ENCODE measurements at regions of chr12 and their contacts with region 1.

Region 1: DNA sequence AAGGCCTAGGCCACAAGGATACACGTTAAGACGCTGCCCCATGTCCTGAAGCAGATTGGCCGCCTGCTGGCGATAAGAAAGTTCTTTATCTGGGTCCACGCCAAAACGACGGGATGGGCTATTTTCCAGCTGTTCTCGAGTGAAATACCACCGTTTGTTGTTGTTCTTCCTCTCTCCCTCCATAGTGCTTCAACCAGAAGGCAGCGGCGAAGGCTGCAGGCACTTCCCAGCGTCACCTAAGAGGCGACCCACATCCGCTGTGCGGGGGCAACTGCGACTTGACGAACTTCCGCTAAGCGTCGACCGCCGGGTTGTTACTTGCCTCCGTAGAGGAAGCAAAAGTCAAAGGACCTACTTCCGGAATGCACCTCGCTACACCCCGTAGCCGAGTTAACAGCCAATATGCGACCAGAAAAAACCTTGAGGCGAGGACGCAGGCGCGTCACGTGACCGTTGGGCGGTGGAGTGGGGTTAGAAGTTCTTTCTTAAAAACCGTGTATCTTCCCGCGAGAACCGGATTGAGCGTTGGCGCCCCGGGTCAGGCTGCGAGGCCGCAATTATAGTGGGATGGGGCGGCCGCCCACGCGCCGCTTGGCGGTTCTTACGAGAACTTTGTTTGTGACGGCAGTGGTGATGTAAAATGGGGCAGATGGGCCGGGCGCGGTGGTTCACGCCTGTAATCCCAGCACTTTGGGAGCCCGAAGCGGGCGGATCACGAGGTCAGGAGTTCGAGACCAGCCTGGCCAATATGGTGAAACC is at the start of gene CCNT1:
- DNase-seq: peak; percentile 98 to 100
- ATAC-seq: peak; percentile 98 to 99
- H3K4me3 ChIP-seq: peak within 1 kb of the TSS; percentile 76 to 89 (median 86)
- H3K27ac ChIP-seq: peak within 1 kb of the TSS; percentile 90 to 96 (median 92)
- H3K4me1 ChIP-seq: peaks cover 27 to 32% of the 10 kb centered on the region in 2 donors
- H3K27me3 ChIP-seq: no peaks in the 10 kb centered on the region
- CTCF ChIP-seq: peak; percentile 12 to 53 (median 48)
- POLR2A ChIP-seq: peak; percentile 77 to 84
- total RNA-seq, gene CCNT1: 18.0 to 21.4 (median 19.6) TPM

Region 2: GRCh38 chr12:48350249-48351021 is 366.2 kb before region 1 on chr12 and contains the start of gene ZNF641:
- in situ Hi-C with region 1: no loop called
- intact Hi-C with region 1: loop called (anchors 2 kb)
- DNase-seq: peak; percentile 67 to 79
- ATAC-seq: peak; percentile 84 to 91
- H3K4me3 ChIP-seq: peak within 1 kb of the TSS; percentile 79 to 94 (median 90)
- H3K27ac ChIP-seq: peak within 1 kb of the TSS; percentile 92 to 98 (median 95)
- H3K4me1 ChIP-seq: peaks cover 17 to 24% of the 10 kb centered on the region in 2 donors
- H3K27me3 ChIP-seq: no peaks in the 10 kb centered on the region
- CTCF ChIP-seq: no peak
- POLR2A ChIP-seq: peak; percentile 60 to 66
- total RNA-seq, gene ZNF641: 31.8 to 43.1 (median 34.2) TPM

Region 3: GRCh38 chr12:48671231-48671856 is 45.3 kb before region 1 on chr12:
- in situ Hi-C with region 1: no loop called
- intact Hi-C with region 1: loop called (anchors 2 kb)
- DNase-seq: peak; percentile 52 to 56
- ATAC-seq: peak; percentile 75 to 87
- H3K4me3 ChIP-seq: no peak overlapping the region
- H3K27ac ChIP-seq: peak overlapping the region; percentile 88 to 99 (median 96)
- H3K4me1 ChIP-seq: peaks cover 51 to 72% of the 10 kb centered on the region in 2 donors
- H3K27me3 ChIP-seq: no peaks in the 10 kb centered on the region
- CTCF ChIP-seq: no peak
- POLR2A ChIP-seq: no peak

Region 4: GRCh38 chr12:48946205-48946604 is 229.5 kb after region 1 on chr12:
- in situ Hi-C with region 1: no loop called
- intact Hi-C with region 1: no loop called
- DNase-seq: no peak
- ATAC-seq: no peak
- H3K4me3 ChIP-seq: no peak overlapping the region
- H3K27ac ChIP-seq: no peak overlapping the region
- H3K4me1 ChIP-seq: peaks cover 0 to 3% of the 10 kb centered on the region in 2 donors
- H3K27me3 ChIP-seq: no peaks in the 10 kb centered on the region
- CTCF ChIP-seq: no peak
- POLR2A ChIP-seq: no peak

Region 5: DNA sequence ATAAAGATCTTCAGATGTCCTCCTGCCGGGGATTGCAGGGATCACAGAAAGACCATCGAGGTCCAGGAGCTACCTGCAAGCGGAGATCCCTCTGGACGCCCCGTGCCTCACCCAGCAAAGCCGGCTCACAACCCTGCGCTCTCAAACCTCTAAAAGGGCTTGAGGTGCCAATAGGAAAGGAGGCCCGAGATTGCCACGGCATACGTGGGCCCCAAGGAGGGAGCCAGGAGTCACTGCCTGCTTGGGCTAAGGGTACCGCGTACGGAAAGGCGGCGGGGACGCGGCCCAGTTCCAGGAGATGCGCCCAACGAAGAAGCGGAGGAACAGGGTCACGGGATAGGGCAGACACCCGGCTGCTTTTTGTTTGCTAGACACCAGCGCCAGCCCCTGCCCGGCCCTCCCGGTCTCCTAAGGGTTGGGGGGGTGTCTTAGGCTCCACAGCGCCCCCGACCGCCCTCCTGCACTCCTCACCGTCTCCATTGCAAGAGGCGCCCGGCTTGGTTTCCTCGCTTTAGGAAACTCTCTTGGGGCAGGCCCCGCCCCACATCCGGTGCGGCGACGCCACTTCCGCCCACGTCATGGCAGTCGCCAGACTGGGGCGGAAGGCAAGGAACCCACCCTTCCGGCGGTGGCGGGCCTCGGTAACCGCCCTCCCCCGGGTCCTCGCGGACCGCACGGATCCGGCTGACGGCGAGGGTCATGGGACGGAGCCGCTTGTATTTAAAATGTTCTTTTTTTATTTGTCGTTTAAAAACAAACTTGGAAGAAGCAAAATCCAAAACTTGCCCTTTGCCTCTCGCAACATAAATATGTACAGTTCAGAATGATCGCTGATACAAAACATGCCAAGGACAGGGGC is 301.8 kb after region 1 on chr12 and contains the start of gene PRKAG1:
- in situ Hi-C with region 1: no loop called
- intact Hi-C with region 1: loop called (anchors 5 kb)
- DNase-seq: peak; percentile 92 to 96
- ATAC-seq: peak; percentile 74 to 82
- H3K4me3 ChIP-seq: peak within 1 kb of the TSS; percentile 79 to 98 (median 89)
- H3K27ac ChIP-seq: peak within 1 kb of the TSS; percentile 96 to 99 (median 98)
- H3K4me1 ChIP-seq: peaks cover 37 to 43% of the 10 kb centered on the region in 2 donors
- H3K27me3 ChIP-seq: no peaks in the 10 kb centered on the region
- CTCF ChIP-seq: peak in 3 of 5 experiments; percentile 34 to 49 (median 41)
- POLR2A ChIP-seq: peak; percentile 89 to 95
- total RNA-seq, gene PRKAG1: 67.4 to 97.7 (median 83.9) TPM

Measured in gastrocnemius medialis (tissue), 4 donors.